GM23248 (cell line): ENCODE measurements at regions of chr12 and their contacts with region 1.

Region 1: GRCh38 chr12:85920324-85920947 is 46.3 kb downstream of the NTS start:
- DNase-seq: peak; percentile 45
- H3K4me3 ChIP-seq: no peak overlapping the region
- H3K27ac ChIP-seq: no peak overlapping the region
- H3K4me1 ChIP-seq: no peaks in the 10 kb centered on the region
- H3K27me3 ChIP-seq: no peaks in the 10 kb centered on the region

Region 2: GRCh38 chr12:85076688-85077430 is 843.6 kb before region 1 on chr12:
- in situ Hi-C with region 1: loop called (anchors 25 kb)
- DNase-seq: peak; percentile 88
- H3K4me3 ChIP-seq: no peak overlapping the region; the same call in 1 of the 2 replicates
- H3K27ac ChIP-seq: no peak overlapping the region
- H3K4me1 ChIP-seq: peaks cover 8% of the 10 kb centered on the region
- H3K27me3 ChIP-seq: no peaks in the 10 kb centered on the region

Region 3: DNA sequence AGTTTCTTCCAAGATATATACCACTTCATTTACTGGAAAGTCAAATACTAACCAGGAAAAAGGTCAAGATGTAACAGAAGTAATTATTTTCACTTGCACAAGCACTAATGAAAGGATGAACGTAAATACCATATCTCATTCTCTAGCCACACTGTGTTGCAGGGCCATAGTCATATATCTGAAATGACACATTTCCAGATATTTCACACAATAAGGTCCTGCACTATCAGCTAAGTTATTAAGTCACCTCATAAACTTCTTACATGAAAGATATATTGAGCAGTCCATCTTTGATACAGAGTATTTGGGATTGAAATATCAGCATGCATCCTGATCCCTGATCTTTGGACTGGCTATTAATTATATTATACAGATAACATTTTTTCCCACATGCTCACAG is 1119.1 kb after region 1 on chr12:
- in situ Hi-C with region 1: no loop called
- DNase-seq: no peak
- H3K4me3 ChIP-seq: no peak overlapping the region
- H3K27ac ChIP-seq: no peak overlapping the region
- H3K4me1 ChIP-seq: no peaks in the 10 kb centered on the region
- H3K27me3 ChIP-seq: no peaks in the 10 kb centered on the region